ENCODE measurements at regions of chr3 and their contacts with region 1.

Region 1: DNA sequence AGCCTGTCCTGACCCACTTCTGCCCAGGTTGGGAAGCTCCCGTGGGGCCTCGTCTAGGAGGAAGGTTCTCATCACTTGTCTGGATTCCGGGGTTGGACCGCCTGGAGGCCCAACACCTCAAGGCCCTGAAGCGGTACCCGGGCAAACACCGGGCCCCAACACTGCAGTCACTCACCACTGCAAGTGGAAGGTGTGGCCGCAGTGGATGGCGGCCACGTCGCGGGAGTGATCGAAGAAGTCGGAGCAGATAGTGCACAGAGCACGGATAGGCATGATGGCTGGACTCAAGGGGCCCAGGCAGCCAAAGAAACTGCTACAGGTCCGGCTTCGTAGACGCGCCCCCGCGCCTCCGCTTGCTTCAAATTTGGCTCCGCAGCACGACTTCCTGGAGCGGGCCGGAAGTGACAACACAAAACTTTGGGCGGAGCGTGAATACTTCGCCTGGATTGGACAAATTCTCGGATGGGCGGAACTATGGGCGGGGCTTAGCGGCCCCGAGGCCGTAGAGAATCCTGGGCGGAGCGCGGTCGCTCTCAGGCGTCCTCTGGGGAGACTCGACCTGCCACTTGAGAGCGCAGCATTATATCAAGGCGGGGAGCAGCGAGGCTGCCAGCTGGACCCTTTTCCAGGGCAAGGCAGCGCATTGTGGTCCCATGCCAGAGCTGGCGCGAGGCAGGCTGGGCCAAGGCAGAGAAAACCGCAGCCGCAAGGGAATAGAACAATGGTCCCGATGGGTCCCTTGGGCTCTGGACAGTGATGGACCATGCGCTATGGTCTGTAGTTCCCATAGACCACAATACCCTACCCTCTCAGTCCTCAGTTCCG is at the start of gene TRAIP:
- DNase-seq: peak; percentile 95 to 97
- ATAC-seq: peak; percentile 99 to 100 (median 99)
- H3K4me3 ChIP-seq: peak within 1 kb of the TSS; percentile 64
- H3K4me3 Mint-ChIP-seq: peak within 1 kb of the TSS; percentile 83
- H3K27ac ChIP-seq: peak within 1 kb of the TSS; percentile 58
- H3K27ac Mint-ChIP-seq: peak within 1 kb of the TSS; percentile 83 to 90
- H3K4me1 ChIP-seq: peaks cover 14% of the 10 kb centered on the region
- H3K4me1 Mint-ChIP-seq: peaks cover 7 to 11% of the 10 kb centered on the region in 2 donors
- H3K27me3 ChIP-seq: no peaks in the 10 kb centered on the region
- H3K27me3 Mint-ChIP-seq: no peaks in the 10 kb centered on the region
- CTCF ChIP-seq: no peak
- total RNA-seq, gene TRAIP: 3.3 to 6.2 (median 4.0) TPM

Region 2: GRCh38 chr3:49906004-49906743 is 49.8 kb after region 1 on chr3:
- intact Hi-C with region 1: loop called (anchors 1 kb)
- DNase-seq: peak; percentile 28 to 72
- ATAC-seq: peak in 2 of 3 donors; percentile 30 to 38
- H3K4me3 ChIP-seq: no peak overlapping the region
- H3K4me3 Mint-ChIP-seq: peak overlapping the region; percentile 21
- H3K27ac ChIP-seq: no peak overlapping the region
- H3K27ac Mint-ChIP-seq: peak overlapping the region in 1 of 2 donors; percentile 71
- H3K4me1 ChIP-seq: peaks cover 36% of the 10 kb centered on the region
- H3K4me1 Mint-ChIP-seq: peaks cover 11 to 26% of the 10 kb centered on the region in 2 donors
- H3K27me3 ChIP-seq: no peaks in the 10 kb centered on the region
- H3K27me3 Mint-ChIP-seq: no peaks in the 10 kb centered on the region
- CTCF ChIP-seq: peak; percentile 47

Region 3: GRCh38 chr3:49939858-49940666 is 83.7 kb after region 1 on chr3 and contains the start of gene RBM6:
- intact Hi-C with region 1: loop called (anchors 5 kb)
- DNase-seq: peak; percentile 87 to 97
- ATAC-seq: peak; percentile 95 to 99 (median 95)
- H3K4me3 ChIP-seq: peak within 1 kb of the TSS; percentile 93
- H3K4me3 Mint-ChIP-seq: peak within 1 kb of the TSS; percentile 99
- H3K27ac ChIP-seq: peak within 1 kb of the TSS; percentile 97
- H3K27ac Mint-ChIP-seq: peak within 1 kb of the TSS; percentile 96 to 99
- H3K4me1 ChIP-seq: peaks cover 28% of the 10 kb centered on the region
- H3K4me1 Mint-ChIP-seq: peaks cover 31 to 33% of the 10 kb centered on the region in 2 donors
- H3K27me3 ChIP-seq: no peaks in the 10 kb centered on the region
- H3K27me3 Mint-ChIP-seq: no peaks in the 10 kb centered on the region
- CTCF ChIP-seq: no peak
- total RNA-seq, gene RBM6: 155 to 193 (median 157) TPM

Region 4: DNA sequence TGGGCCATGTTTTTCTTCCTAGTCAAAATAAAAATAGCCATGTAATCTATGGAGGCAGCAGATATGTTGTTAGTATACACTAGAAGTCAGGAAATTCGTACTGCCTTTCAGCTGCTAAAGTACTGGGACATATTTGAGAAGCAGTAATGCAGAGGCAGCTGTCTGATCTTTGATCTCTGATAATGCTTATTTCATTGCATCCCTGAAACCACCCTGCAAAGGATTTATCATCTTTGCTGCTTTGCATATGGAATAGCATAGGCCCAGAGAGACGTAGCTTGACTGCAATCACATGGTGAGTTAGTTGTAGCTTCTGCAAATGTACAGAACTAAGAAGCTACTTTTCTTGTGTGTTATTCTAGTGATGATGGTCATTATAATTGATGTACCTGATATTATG is 135.9 kb after region 1 on chr3:
- intact Hi-C with region 1: no loop called
- DNase-seq: no peak
- ATAC-seq: no peak
- H3K4me3 ChIP-seq: no peak overlapping the region
- H3K4me3 Mint-ChIP-seq: no peak overlapping the region
- H3K27ac ChIP-seq: no peak overlapping the region
- H3K27ac Mint-ChIP-seq: no peak overlapping the region
- H3K4me1 ChIP-seq: no peaks in the 10 kb centered on the region
- H3K4me1 Mint-ChIP-seq: peaks cover 7 to 8% of the 10 kb centered on the region in 2 donors
- H3K27me3 ChIP-seq: no peaks in the 10 kb centered on the region
- H3K27me3 Mint-ChIP-seq: no peaks in the 10 kb centered on the region
- CTCF ChIP-seq: no peak